ENCODE measurements at regions of chr4 and their contacts with region 1.

Region 1: DNA sequence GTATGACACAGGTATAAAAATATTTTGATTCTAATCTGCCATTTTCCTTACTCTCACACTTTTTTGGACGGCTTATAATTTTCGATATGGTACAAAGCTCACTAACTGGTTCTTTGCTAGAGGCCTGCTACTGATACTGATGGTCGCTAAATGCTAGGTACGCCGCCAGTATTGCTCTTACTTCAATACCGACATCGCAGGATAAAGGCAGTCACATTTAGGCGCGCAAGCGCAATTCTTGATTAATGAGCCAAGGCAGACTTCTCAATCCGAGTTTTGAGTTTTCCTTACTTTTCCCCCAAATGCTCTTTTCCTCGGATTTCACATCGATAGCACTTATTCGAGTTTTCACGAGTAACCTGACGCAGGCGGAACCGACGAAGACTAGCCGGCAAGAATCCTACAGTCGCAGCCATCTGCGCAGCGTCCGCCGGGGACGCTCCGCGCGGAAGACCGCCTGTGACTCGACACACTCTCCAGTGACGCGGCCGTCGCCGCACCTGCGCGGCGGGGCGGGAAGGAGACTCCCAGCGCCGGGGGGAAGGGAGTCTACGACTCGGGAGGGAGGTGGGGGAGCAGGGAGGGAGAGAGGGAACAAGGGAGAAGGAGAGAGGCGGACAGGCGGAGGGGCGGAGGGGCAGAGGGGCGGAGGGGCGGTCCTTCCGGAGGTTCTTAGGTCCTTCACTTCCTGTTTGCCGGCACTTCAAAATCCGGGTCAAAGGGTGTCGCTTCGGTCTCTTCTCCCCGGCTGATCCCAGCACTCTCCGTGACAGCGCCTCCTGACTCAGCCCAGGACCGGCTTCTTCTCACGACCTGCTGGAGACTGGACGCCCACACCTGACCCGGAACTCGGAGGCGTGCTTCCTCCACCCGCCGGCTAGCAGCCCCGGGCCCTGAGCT is at the start of gene USP38:
- DNase-seq: peak; percentile 73
- ATAC-seq: peak; percentile 88
- H3K4me3 ChIP-seq: peak within 1 kb of the TSS; percentile 89
- H3K27ac ChIP-seq: peak within 1 kb of the TSS; percentile 77
- H3K4me1 ChIP-seq: no peaks in the 10 kb centered on the region
- H3K27me3 ChIP-seq: no peaks in the 10 kb centered on the region
- CTCF ChIP-seq: no peak
- EP300 ChIP-seq: no peak
- POLR2A ChIP-seq: peak; percentile 77
- RAD21 ChIP-seq: no peak
- polyA plus RNA-seq, gene USP38: 4.4 to 4.6 TPM

Region 2: DNA sequence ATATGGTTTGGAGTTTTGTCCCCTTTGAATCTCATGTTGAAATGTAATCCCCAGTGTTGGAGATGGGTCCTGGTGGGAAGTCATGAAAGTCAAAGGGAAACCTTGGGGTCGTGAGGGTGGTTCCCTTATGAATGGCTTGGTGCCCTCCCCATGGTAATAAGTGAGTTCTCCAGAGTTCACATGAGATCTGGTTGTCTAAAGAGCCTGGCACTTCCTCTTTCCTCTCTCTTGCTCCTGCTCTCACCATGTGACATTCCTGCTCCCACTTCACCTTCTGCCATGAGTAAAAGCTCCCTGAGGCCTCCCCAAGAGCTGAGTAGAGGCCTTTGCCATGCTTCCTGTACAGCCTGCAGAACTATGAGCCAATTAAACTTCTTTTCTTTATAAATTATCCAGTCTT is 1553.6 kb before region 1 on chr4:
- CTCF ChIA-PET with region 1: no interaction called
- POLR2A ChIA-PET with region 1: no interaction called
- RAD21 ChIA-PET with region 1: no interaction called
- SMC1A ChIA-PET with region 1: no interaction called
- in situ Hi-C with region 1: no loop called
- intact Hi-C with region 1: loop called (anchors 5 kb)
- DNase-seq: no peak
- ATAC-seq: no peak
- H3K4me3 ChIP-seq: no peak overlapping the region
- H3K27ac ChIP-seq: no peak overlapping the region
- H3K4me1 ChIP-seq: peaks cover 8% of the 10 kb centered on the region
- H3K27me3 ChIP-seq: no peaks in the 10 kb centered on the region
- CTCF ChIP-seq: no peak
- EP300 ChIP-seq: no peak
- POLR2A ChIP-seq: no peak
- RAD21 ChIP-seq: no peak

Region 3: DNA sequence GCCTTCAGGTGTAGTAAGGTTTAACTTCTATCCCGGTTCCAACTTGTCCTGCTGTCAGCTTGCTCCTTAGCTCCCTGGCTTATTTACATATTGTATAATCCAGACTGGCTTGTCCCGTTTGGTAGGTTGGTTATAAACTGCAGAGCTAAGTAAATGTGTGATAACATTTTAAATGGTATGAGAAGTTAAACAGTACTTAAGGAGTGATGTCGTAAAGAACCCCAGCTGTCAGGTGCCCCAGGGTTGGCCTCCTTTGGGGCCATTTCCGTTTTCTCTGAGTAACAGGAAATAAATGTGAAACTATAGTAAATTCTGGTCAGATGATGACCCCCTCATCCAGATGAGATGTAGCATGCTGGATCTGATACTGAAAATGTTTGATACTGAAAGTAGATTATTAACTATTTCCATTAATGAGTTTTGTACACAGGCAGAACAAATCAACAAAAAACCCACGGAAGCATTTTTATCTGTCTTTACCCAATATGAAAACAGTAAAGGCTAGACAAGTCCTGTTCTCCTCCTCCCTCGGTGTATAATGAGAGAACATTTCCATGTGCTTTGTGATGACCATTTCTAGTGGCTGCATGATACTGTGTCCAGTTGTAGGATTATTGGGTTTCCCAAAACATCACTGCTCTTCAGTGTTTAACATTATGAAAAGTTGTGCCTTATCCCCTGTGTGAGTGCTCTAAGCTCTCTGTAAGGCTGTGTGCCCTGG is 174.6 kb after region 1 on chr4:
- CTCF ChIA-PET with region 1: no interaction called
- POLR2A ChIA-PET with region 1: no interaction called
- RAD21 ChIA-PET with region 1: no interaction called
- SMC1A ChIA-PET with region 1: no interaction called
- in situ Hi-C with region 1: no loop called
- intact Hi-C with region 1: loop called (anchors 5 kb)
- DNase-seq: no peak
- ATAC-seq: peak; percentile 83
- H3K4me3 ChIP-seq: no peak overlapping the region
- H3K27ac ChIP-seq: peak overlapping the region; percentile 66
- H3K4me1 ChIP-seq: peaks cover 21% of the 10 kb centered on the region
- H3K27me3 ChIP-seq: no peaks in the 10 kb centered on the region
- CTCF ChIP-seq: no peak
- EP300 ChIP-seq: peak; percentile 41 to 67; a peak in 2 of 4 replicates
- POLR2A ChIP-seq: no peak
- RAD21 ChIP-seq: no peak

Region 4: GRCh38 chr4:143626134-143626911 is 441.9 kb after region 1 on chr4:
- CTCF ChIA-PET with region 1: no interaction called
- POLR2A ChIA-PET with region 1: no interaction called
- RAD21 ChIA-PET with region 1: no interaction called
- SMC1A ChIA-PET with region 1: no interaction called
- in situ Hi-C with region 1: no loop called
- intact Hi-C with region 1: no loop called
- DNase-seq: no peak
- ATAC-seq: no peak
- H3K4me3 ChIP-seq: no peak overlapping the region
- H3K27ac ChIP-seq: no peak overlapping the region
- H3K4me1 ChIP-seq: no peaks in the 10 kb centered on the region
- H3K27me3 ChIP-seq: no peaks in the 10 kb centered on the region
- CTCF ChIP-seq: no peak
- EP300 ChIP-seq: no peak
- POLR2A ChIP-seq: no peak
- RAD21 ChIP-seq: no peak